Activated CD8-positive, alpha-beta T cell treated with anti-CD3 and anti-CD28 coated beads for 36 hours (primary cell): ENCODE measurements at regions of chr17 and their contacts with region 1.

Region 1: GRCh38 chr17:8057691-8058114 is 18.8 kb downstream of the ALOX15B start:
- DNase-seq: peak; percentile 60
- ATAC-seq: peak; percentile 80
- H3K4me3 Mint-ChIP-seq: no peak overlapping the region
- H3K27ac Mint-ChIP-seq: no peak overlapping the region
- H3K4me1 Mint-ChIP-seq: peaks cover 15% of the 10 kb centered on the region
- H3K27me3 Mint-ChIP-seq: peaks cover 39% of the 10 kb centered on the region
- CTCF ChIP-seq: peak; percentile 74

Region 2: DNA sequence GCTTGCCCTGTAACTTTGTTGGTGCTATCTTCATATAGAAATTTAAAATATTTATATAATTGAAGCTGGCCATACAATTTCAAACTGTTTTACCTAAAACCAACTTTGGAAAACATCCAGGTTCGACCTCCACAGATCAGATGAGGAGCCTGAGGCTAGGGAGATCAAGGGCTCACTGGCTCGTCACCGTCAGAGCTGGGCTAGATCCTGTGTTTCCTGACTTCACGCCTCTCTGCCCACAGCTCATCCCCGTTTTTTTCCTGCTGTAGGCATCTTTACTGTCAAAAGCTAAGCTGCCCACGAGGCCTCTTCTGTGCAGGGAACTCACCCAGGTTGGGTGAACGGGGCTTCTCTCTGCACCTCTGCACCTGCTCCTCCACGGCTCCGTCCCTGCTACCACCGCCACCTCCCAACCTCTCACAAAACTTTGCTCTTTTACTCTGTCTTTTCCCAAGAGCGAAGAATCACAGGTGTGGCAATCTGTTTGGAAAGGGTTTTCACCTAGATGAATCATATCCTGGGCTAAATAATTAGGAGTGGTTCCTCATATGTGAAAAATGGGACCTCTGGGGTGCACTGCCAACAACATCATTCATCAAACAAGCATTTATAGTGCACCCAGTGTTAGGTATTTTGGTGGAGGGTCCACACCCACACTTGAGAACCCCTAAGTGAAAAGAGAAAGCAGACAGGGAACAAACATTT is 248.5 kb before region 1 on chr17:
- CTCF ChIA-PET with region 1: no interaction called
- POLR2A ChIA-PET with region 1: no interaction called
- intact Hi-C with region 1: no loop called
- DNase-seq: no peak
- ATAC-seq: no peak
- H3K4me3 Mint-ChIP-seq: no peak overlapping the region
- H3K27ac Mint-ChIP-seq: no peak overlapping the region
- H3K4me1 Mint-ChIP-seq: peaks cover 6% of the 10 kb centered on the region
- H3K27me3 Mint-ChIP-seq: peaks cover 3% of the 10 kb centered on the region
- CTCF ChIP-seq: no peak

Region 3: DNA sequence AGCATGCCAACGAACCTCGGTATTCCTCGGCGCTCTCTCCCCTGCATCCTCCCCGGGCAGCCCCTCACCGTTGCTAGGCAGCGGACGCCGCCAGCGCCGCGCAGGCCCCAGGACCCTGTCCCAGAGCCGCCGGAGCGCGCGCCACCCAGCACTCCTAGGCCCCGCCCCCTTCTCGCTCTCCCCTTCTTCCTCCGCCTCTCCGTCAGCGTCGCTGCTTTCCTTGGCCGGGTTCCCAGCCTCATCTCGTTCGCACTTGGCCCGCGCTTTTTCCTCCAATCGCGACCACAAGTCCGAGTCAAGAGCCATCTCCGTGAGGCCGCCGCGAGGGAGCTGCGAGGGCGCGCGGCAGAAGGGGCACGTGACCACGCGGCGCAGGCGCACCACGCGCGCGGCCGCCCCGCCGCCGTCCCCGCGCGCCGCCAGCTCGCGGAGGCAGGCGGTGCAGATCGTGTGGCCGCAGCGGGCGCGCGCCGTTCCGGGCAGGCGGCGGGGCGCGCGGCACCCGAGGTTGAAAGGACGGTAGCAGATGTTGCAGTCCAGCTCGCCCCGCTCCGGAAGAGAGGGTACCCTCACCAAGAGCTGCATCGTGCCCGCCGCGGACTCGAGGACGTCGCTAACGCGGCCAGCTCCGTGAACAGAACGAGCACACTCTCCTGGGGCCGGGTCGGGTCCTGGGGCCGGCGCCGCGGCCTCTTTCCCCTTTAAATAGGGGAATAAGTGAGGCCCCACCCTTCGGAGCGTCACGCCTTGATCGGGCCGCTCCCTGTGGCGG is 141.9 kb before region 1 on chr17 and contains the start of gene RNF227:
- CTCF ChIA-PET with region 1: interaction called, 18 read pairs
- POLR2A ChIA-PET with region 1: interaction called, 4 read pairs
- intact Hi-C with region 1: loop called (anchors 5 kb)
- DNase-seq: peak; percentile 94
- ATAC-seq: peak; percentile 87
- H3K4me3 Mint-ChIP-seq: peak within 1 kb of the TSS; percentile 85
- H3K27ac Mint-ChIP-seq: peak within 1 kb of the TSS; percentile 87
- H3K4me1 Mint-ChIP-seq: peaks cover 22% of the 10 kb centered on the region
- H3K27me3 Mint-ChIP-seq: no peaks in the 10 kb centered on the region
- CTCF ChIP-seq: no peak
- total RNA-seq, gene RNF227: 5.1 to 5.2 TPM

Region 4: DNA sequence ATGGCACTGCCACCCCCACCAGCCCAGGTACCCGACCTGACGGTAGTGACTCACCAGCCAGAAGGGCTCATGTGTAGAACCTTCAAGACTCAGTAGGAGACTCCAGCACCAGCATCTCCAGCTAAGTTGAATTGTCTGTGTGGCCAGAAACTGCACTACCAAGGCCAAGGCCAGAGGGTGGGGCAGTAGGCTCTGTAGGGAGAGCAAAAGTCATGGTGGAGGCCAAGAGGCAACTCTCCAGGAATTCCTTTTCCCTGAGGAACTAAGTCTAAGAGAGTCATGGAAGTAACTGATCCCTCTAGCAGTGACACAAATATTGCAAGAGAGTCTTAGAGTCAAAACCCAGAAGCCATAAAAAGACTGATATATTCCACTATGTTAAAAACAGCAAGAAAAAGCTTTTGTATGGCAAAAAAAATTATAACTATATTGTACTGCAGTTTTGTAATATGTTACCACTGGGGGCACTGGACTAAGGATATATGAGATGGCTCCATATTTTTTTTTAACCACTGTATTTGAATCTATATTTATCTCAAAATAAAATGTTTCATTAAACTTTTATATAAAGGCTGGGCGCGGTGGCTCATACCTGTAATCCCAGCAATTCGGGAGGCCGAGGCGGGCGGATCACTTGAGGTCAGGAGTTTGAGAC is 85.4 kb before region 1 on chr17:
- CTCF ChIA-PET with region 1: no interaction called
- POLR2A ChIA-PET with region 1: no interaction called
- intact Hi-C with region 1: no loop called
- DNase-seq: no peak
- ATAC-seq: no peak
- H3K4me3 Mint-ChIP-seq: no peak overlapping the region
- H3K27ac Mint-ChIP-seq: no peak overlapping the region
- H3K4me1 Mint-ChIP-seq: no peaks in the 10 kb centered on the region
- H3K27me3 Mint-ChIP-seq: peaks cover 4% of the 10 kb centered on the region
- CTCF ChIP-seq: peak; percentile 21

Region 5: DNA sequence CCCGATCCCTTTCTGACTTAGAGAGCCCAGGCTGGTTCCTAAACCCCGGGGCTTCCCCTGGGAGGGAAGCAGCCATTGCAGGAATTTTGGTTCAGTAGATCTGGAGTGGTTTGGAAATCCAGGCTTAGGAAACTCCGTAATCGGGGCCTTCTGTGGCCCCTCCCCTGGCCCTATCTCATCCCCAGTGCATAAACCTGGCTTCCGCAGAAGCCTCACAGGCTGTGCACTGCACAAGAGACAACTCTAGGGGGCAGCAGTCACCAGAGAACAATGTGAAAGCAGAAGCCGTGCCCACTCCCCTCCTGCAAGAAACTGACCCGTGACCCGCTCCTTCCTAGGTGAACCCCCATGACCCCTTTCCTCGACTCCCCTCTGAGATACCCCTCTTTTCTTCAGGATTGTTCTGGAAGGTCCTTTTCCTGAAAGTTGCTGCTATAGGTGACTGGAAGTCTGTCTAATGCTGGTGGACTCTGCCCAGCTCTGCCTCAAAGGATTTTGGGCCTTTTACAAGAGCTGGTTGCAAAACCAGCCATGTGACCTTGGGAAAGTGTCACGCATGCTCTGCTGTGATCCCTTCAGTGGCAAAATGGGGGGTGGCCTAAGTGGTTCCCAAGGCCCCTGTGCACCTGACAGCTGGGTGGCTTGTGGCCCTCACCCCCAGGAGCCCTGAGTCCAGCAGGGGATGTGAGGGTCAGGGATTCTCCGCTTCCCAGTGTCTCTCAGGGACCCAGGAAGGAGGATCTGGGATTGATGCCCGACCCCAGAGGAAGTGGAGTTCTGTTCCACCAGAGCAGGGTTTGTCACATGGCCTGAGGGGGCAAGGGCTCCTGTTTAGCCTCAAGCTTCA is 40.8 kb before region 1 on chr17:
- CTCF ChIA-PET with region 1: interaction called, 60 read pairs
- POLR2A ChIA-PET with region 1: no interaction called
- intact Hi-C with region 1: loop called (anchors 5 kb)
- DNase-seq: peak; percentile 77
- ATAC-seq: peak; percentile 92
- H3K4me3 Mint-ChIP-seq: peak overlapping the region; percentile 64
- H3K27ac Mint-ChIP-seq: no peak overlapping the region
- H3K4me1 Mint-ChIP-seq: peaks cover 11% of the 10 kb centered on the region
- H3K27me3 Mint-ChIP-seq: peaks cover 14% of the 10 kb centered on the region
- CTCF ChIP-seq: peak; percentile 85

Region 6: DNA sequence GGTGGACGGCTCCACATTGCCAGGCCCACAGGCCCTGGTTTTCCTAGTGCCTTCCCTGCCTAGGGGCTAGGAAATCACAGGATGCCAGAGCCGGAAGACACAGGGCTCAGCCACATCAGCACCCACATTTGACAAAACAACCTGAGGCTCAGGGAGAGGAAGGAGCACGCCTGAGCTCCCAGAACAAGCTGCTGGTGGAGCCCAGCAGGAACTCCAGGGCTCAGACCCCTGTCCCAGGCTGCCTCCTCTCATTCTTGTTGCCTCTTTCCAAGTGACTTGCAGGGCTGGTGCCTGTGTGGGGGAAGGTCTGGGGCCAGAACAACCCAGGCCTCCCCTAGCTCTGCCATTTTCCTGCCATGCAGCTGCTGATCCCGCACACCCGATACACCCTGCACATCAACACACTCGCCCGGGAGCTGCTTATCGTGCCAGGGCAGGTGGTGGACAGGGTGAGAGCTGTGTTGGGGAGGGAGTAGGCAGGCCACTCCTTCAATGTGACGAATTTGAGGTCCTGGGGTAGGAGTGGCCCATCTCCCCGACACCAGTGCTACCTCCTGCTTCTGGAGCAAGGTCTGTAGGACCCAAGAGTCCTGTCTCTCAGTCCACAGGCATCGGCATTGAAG is 11.3 kb before region 1 on chr17:
- CTCF ChIA-PET with region 1: interaction called, 35 read pairs
- POLR2A ChIA-PET with region 1: interaction called, 4 read pairs
- intact Hi-C with region 1: no loop called
- DNase-seq: no peak
- ATAC-seq: no peak
- H3K4me3 Mint-ChIP-seq: no peak overlapping the region
- H3K27ac Mint-ChIP-seq: no peak overlapping the region
- H3K4me1 Mint-ChIP-seq: no peaks in the 10 kb centered on the region
- H3K27me3 Mint-ChIP-seq: peaks cover 2% of the 10 kb centered on the region
- CTCF ChIP-seq: no peak

Region 7: DNA sequence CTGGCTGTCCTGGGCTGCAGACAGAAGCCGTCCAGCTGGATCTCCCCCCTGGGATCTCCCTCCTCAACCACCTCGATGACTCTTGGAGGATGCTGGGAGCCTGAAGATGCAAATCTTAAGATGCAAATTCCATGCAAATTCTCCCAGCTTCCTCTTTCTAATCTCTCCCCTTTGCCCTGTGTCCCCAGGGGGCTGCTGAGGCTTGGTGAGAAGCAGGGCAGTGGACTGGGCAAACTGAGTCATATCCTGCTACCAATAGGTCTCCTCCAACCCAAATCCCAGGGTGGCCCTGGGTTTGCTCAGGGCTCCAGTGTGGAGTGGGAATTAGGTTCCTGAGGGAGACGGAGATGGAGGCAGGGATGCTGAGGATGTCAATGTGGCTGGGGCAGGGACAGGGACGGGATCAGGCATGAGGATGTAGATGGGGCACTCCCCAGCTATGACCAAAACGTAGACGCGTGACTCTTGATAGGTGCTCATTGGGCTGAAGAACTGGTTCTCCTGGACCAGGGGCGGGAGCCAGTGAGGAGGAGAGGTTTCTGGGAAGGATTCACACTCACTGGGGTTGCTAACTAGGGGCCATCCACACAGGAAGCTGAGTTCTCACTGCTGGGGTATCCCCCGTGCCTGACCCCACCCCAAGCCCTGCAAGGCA is 33.5 kb after region 1 on chr17:
- CTCF ChIA-PET with region 1: interaction called, 84 read pairs
- POLR2A ChIA-PET with region 1: no interaction called
- intact Hi-C with region 1: no loop called
- DNase-seq: no peak
- ATAC-seq: no peak
- H3K4me3 Mint-ChIP-seq: no peak overlapping the region
- H3K27ac Mint-ChIP-seq: no peak overlapping the region
- H3K4me1 Mint-ChIP-seq: peaks cover 5% of the 10 kb centered on the region
- H3K27me3 Mint-ChIP-seq: peaks cover 27% of the 10 kb centered on the region
- CTCF ChIP-seq: no peak

Region 8: GRCh38 chr17:8109661-8110464 is 52.2 kb after region 1 on chr17:
- CTCF ChIA-PET with region 1: interaction called, 93 read pairs
- POLR2A ChIA-PET with region 1: no interaction called
- intact Hi-C with region 1: loop called (anchors 5 kb)
- DNase-seq: peak; percentile 87
- ATAC-seq: peak; percentile 98
- H3K4me3 Mint-ChIP-seq: peak overlapping the region; percentile 19
- H3K27ac Mint-ChIP-seq: no peak overlapping the region
- H3K4me1 Mint-ChIP-seq: no peaks in the 10 kb centered on the region
- H3K27me3 Mint-ChIP-seq: peaks cover 15% of the 10 kb centered on the region
- CTCF ChIP-seq: peak; percentile 98

Region 9: DNA sequence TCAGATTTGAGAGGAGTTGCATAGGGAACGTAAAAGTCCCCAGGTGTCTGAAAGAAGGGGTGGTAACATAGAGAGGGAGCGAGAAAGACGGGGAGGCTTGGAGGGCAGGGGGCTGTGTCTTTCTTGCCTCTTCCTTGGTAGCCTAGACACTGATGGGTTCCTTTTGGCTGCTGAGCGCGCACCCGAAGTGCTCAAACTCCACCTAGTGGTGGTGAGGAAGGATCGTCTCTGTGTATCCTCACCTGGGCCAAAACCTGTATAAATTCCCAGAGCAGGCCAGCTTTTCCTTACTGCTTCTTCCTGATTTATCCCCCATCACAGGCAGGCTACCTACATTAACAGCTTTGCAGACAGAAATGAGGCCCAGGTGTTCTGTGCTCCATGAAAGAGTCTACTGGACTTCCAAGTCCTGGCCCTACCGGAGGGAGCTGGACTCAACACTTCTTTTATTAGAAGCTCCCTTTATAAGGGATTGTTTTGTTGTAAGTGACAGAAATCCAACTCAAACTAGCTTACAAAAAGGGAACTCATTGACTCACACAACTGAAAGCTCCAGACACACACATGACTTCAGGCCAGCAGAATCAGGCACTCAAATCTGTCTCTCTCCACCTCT is 243.0 kb after region 1 on chr17:
- CTCF ChIA-PET with region 1: interaction called, 17 read pairs
- POLR2A ChIA-PET with region 1: no interaction called
- intact Hi-C with region 1: no loop called
- DNase-seq: peak; percentile 70
- ATAC-seq: peak; percentile 95
- H3K4me3 Mint-ChIP-seq: no peak overlapping the region
- H3K27ac Mint-ChIP-seq: peak overlapping the region; percentile 41
- H3K4me1 Mint-ChIP-seq: peaks cover 6% of the 10 kb centered on the region
- H3K27me3 Mint-ChIP-seq: no peaks in the 10 kb centered on the region
- CTCF ChIP-seq: peak; percentile 84